Mammary epithelial cell (primary cell): ENCODE measurements at regions of chr9 and their contacts with region 1.

Region 1: GRCh38 chr9:86854898-86855523 is 92.3 kb downstream of the GAS1 start:
- DNase-seq: peak; percentile 68
- H3K4me3 ChIP-seq: no peak overlapping the region
- H3K27ac ChIP-seq: no peak overlapping the region
- H3K4me1 ChIP-seq: peaks cover 15% of the 10 kb centered on the region
- H3K27me3 ChIP-seq: no peaks in the 10 kb centered on the region
- CTCF ChIP-seq: no peak

Region 2: DNA sequence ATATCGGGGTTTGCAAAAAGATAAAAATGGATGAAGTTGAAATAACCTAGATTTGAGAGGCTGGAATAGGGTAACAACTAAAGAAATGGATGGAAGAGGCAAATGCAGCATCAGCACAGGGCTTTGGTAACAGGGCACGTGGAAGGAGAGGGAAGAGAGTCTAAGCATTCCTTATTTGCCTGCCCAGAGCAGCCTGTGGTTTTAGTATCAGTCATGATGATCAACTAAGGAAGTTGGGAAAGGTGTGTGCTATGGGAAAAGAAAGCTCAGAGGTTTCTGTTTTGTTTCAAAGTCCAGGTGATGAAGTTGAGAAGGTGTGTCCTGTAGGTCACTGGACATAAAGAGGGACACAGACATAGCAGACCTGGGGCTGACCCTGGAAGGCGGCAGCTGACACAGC is 63.5 kb after region 1 on chr9:
- CTCF ChIA-PET with region 1: no interaction called
- dilution Hi-C with region 1: no loop called
- in situ Hi-C with region 1: no loop called
- intact Hi-C with region 1: loop called (anchors 10 kb)
- DNase-seq: peak; percentile 78
- H3K4me3 ChIP-seq: no peak overlapping the region
- H3K27ac ChIP-seq: no peak overlapping the region
- H3K4me1 ChIP-seq: peaks cover 9% of the 10 kb centered on the region
- H3K27me3 ChIP-seq: no peaks in the 10 kb centered on the region
- CTCF ChIP-seq: no peak

Region 3: GRCh38 chr9:87080512-87081264 is 225.7 kb after region 1 on chr9:
- CTCF ChIA-PET with region 1: no interaction called
- dilution Hi-C with region 1: no loop called
- in situ Hi-C with region 1: no loop called
- intact Hi-C with region 1: loop called (anchors 10 kb)
- DNase-seq: no peak
- H3K4me3 ChIP-seq: no peak overlapping the region
- H3K27ac ChIP-seq: no peak overlapping the region
- H3K4me1 ChIP-seq: peaks cover 7% of the 10 kb centered on the region
- H3K27me3 ChIP-seq: no peaks in the 10 kb centered on the region
- CTCF ChIP-seq: peak in 1 of 2 donors; percentile 34